CD14-positive monocyte (primary cell): ENCODE measurements at regions of chr12 and their contacts with region 1.

Region 1: GRCh38 chr12:6965026-6965661 is 5.3 kb downstream of the PHB2 start:
- DNase-seq: peak; percentile 78 to 90 (median 85)
- H3K4me3 ChIP-seq: no peak overlapping the region
- H3K4me3 Mint-ChIP-seq: no peak overlapping the region
- H3K27ac ChIP-seq: peak overlapping the region; percentile 30
- H3K27ac Mint-ChIP-seq: peak overlapping the region; percentile 40 to 89 (median 82)
- H3K4me1 ChIP-seq: peaks cover 57 to 66% of the 10 kb centered on the region in 2 donors
- H3K4me1 Mint-ChIP-seq: peaks cover 65% of the 10 kb centered on the region
- H3K27me3 ChIP-seq: no peaks in the 10 kb centered on the region
- H3K27me3 Mint-ChIP-seq: peaks cover 0 to 5% (median 0%) of the 10 kb centered on the region in 3 donors
- CTCF ChIP-seq: peak; percentile 88

Region 2: GRCh38 chr12:6662906-6663742 is 302.0 kb before region 1 on chr12 and contains the start of gene ING4:
- intact Hi-C with region 1: loop called in 1 of 2 experiments (anchors 1 kb)
- DNase-seq: peak; percentile 99 to 100 (median 100)
- H3K4me3 ChIP-seq: peak within 1 kb of the TSS; percentile 80 to 97 (median 88)
- H3K4me3 Mint-ChIP-seq: peak within 1 kb of the TSS; percentile 88 to 100
- H3K27ac ChIP-seq: peak within 1 kb of the TSS; percentile 34 to 93
- H3K27ac Mint-ChIP-seq: peak within 1 kb of the TSS; percentile 89 to 100 (median 98)
- H3K4me1 ChIP-seq: peaks cover 17 to 37% of the 10 kb centered on the region in 2 donors
- H3K4me1 Mint-ChIP-seq: peaks cover 34% of the 10 kb centered on the region
- H3K27me3 ChIP-seq: no peaks in the 10 kb centered on the region
- H3K27me3 Mint-ChIP-seq: peaks cover 0 to 1% (median 0%) of the 10 kb centered on the region in 3 donors
- CTCF ChIP-seq: no peak
- polyA plus RNA-seq, gene ING4: 62.2 to 67.1 (median 64.0) TPM

Region 3: DNA sequence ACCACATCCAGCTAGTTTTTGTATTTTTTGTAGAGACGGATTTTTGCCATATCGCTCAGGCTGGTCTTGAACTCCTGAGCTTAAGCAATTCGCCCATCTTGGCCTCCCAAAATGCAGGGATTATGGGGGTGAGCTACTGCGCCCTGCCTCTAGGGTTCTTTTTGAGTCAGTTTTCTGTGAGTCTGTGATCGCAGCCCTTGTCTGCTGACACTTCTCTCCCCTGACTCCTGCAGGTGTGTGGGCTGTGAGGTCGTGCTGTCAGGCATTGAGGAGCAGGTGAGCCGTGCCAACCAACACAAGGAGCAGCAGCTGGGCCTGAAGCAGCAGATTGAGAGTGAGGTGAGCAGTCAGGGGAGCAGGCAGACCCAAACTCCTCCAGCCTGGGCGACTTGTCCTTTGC is 235.0 kb before region 1 on chr12:
- intact Hi-C with region 1: no loop called
- DNase-seq: no peak
- H3K4me3 ChIP-seq: no peak overlapping the region
- H3K4me3 Mint-ChIP-seq: no peak overlapping the region
- H3K27ac ChIP-seq: no peak overlapping the region
- H3K27ac Mint-ChIP-seq: peak overlapping the region in 1 of 7 donors; percentile 37
- H3K4me1 ChIP-seq: no peaks in the 10 kb centered on the region
- H3K4me1 Mint-ChIP-seq: no peaks in the 10 kb centered on the region
- H3K27me3 ChIP-seq: no peaks in the 10 kb centered on the region
- H3K27me3 Mint-ChIP-seq: peaks cover 0 to 2% (median 0%) of the 10 kb centered on the region in 3 donors
- CTCF ChIP-seq: no peak

Region 4: DNA sequence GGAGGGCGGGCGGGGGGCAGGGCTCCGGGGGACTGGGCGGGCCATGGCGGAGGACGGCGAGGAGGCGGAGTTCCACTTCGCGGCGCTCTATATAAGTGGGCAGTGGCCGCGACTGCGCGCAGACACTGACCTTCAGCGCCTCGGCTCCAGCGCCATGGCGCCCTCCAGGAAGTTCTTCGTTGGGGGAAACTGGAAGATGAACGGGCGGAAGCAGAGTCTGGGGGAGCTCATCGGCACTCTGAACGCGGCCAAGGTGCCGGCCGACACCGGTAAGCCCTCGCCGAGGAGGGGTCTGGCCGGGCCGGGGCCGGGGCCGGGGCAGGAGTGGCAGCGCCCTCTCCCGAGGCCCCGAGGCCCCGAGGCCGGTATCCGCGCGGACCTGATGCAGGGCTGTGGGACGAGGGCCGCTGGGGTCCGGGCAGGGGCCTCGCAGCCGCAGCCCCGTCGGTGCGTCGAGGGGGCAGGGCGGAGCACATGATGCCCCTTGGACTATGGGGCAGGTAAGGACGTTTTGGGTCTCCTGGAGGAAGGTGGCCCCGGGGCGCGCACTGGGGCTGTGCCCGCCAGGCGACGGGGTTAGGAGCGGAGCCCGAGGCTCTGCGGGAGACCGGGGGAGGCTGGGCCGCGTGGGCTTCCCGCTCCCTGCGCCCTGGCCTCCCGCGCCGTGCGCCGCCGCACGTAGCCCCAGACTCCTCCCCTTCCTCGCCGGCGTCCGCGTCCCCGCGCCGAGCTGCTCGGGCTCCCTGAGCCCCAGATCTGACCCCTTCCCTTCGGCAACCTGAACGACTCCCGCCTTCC is 97.5 kb before region 1 on chr12 and contains the start of gene TPI1:
- intact Hi-C with region 1: loop called (anchors 2 to 5 kb)
- DNase-seq: peak; percentile 86 to 88 (median 86)
- H3K4me3 ChIP-seq: peak within 1 kb of the TSS; percentile 76 to 97 (median 86)
- H3K4me3 Mint-ChIP-seq: peak within 1 kb of the TSS; percentile 92 to 95
- H3K27ac ChIP-seq: peak within 1 kb of the TSS; percentile 63 to 86
- H3K27ac Mint-ChIP-seq: peak within 1 kb of the TSS; percentile 82 to 95 (median 92)
- H3K4me1 ChIP-seq: peaks cover 36 to 56% of the 10 kb centered on the region in 2 donors
- H3K4me1 Mint-ChIP-seq: peaks cover 52% of the 10 kb centered on the region
- H3K27me3 ChIP-seq: no peaks in the 10 kb centered on the region
- H3K27me3 Mint-ChIP-seq: peaks cover 0 to 5% (median 3%) of the 10 kb centered on the region in 3 donors
- CTCF ChIP-seq: peak; percentile 15
- polyA plus RNA-seq, gene TPI1: 446 to 839 (median 764) TPM

Region 5: DNA sequence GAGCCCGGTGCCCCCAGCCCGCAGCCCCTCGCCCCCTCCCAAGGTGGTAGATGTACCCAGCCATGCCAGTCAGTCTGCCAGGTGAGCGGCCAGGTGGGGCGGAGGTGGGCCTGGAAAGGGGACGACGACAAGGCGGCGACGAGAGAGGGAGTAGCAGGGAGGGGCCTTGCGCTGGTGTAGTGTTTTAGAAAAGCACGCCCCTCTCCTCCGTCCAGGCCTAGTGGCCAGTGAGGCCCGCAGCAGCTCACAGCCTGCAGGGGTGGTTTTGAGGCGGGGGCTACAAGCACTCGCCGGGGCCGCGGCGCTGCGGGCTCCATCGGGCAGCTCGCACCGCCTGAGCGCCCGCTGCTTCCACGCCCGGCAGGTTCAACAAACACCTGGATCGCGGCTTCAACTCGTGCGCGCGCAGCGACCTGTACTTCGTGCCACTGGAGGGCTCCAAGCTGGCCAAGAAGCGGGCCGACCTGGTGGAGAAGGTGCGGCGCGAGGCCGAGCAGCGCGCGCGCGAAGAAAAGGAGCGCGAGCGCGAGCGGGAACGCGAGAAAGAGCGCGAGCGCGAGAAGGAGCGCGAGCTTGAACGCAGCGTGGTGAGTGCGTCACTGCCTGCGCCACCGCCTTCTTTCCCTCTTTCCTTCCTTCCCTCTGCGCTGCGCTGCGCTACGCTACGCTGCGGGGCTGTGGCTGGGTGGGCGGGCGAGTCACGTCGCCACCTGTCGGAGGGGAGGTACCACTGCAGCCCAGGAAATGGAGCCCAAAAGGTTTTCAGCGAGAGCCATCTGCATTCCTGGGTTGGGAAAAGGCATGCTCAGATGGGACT is 27.5 kb before region 1 on chr12:
- intact Hi-C with region 1: loop called (anchors 2 to 5 kb)
- DNase-seq: peak; percentile 95 to 96 (median 96)
- H3K4me3 ChIP-seq: peak overlapping the region; percentile 55 to 90 (median 87)
- H3K4me3 Mint-ChIP-seq: peak overlapping the region; percentile 78 to 79
- H3K27ac ChIP-seq: peak overlapping the region; percentile 18 to 82
- H3K27ac Mint-ChIP-seq: peak overlapping the region in 6 of 7 donors; percentile 50 to 84 (median 68)
- H3K4me1 ChIP-seq: peaks cover 38 to 42% of the 10 kb centered on the region in 2 donors
- H3K4me1 Mint-ChIP-seq: peaks cover 37% of the 10 kb centered on the region
- H3K27me3 ChIP-seq: no peaks in the 10 kb centered on the region
- H3K27me3 Mint-ChIP-seq: no peaks in the 10 kb centered on the region
- CTCF ChIP-seq: peak; percentile 94

Region 6: GRCh38 chr12:6953442-6954315 is 11.5 kb before region 1 on chr12:
- intact Hi-C with region 1: loop called in 1 of 2 experiments (anchors 1 kb)
- DNase-seq: peak; percentile 86 to 89 (median 89)
- H3K4me3 ChIP-seq: peak overlapping the region; percentile 61 to 99 (median 98)
- H3K4me3 Mint-ChIP-seq: peak overlapping the region; percentile 97 to 99
- H3K27ac ChIP-seq: peak overlapping the region; percentile 87 to 95
- H3K27ac Mint-ChIP-seq: peak overlapping the region; percentile 93 to 98 (median 96)
- H3K4me1 ChIP-seq: peaks cover 77 to 84% of the 10 kb centered on the region in 2 donors
- H3K4me1 Mint-ChIP-seq: peaks cover 73% of the 10 kb centered on the region
- H3K27me3 ChIP-seq: no peaks in the 10 kb centered on the region
- H3K27me3 Mint-ChIP-seq: peaks cover 0 to 3% (median 0%) of the 10 kb centered on the region in 3 donors
- CTCF ChIP-seq: no peak